Right cardiac atrium (tissue), 5 donors: ENCODE measurements at regions of chr3 and their contacts with region 1.

Region 1: GRCh38 chr3:126197854-126198584 is 17.6 kb upstream of the ALDH1L1 start:
- DNase-seq: peak; percentile 64 to 79 (median 67)
- ATAC-seq: peak; percentile 91 to 92
- H3K4me3 ChIP-seq: no peak overlapping the region
- H3K27ac ChIP-seq: no peak overlapping the region
- H3K4me1 ChIP-seq: no peaks in the 10 kb centered on the region
- H3K27me3 ChIP-seq: no peaks in the 10 kb centered on the region

Region 2: DNA sequence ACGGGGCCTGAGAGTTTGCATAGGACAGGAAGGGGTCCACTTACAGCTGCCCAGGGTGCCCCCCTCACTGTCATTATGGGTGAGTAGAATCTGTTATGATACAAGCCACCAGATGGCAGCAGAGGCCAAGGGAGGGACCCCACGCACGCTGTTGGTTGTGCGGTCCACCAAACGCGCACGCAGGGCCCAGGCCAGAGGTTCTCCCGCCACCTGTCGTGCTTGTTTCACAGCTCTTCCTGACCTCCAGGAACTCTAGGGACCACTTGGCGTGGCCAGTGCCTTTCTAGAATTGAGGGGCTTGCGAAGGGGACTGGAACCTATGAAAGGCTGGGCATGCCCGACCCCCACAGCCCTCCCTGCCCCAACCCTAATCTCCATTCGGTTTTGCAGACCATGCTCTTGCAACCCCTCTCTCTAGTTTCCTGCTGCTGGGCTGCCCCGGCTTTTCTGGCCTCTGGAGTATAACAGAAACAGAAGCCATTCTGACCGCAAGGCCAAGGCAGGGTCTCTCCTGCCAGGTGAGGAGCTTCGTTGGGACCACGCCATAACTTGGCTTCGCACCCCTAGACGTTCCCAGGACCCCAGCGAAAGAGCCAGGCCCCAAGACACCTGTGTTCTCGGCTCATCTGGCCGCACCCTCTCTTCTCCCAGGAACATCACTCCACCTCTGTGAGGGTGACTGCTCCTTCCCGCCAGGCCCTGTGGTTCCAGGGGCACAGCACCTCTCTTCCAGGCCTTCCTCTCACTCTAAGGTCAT is 63.6 kb before region 1 on chr3:
- intact Hi-C with region 1: loop called in 3 of 4 experiments (anchors 2 to 10 kb)
- DNase-seq: peak; percentile 66 to 84 (median 77)
- ATAC-seq: peak; percentile 70 to 82
- H3K4me3 ChIP-seq: no peak overlapping the region
- H3K27ac ChIP-seq: no peak overlapping the region
- H3K4me1 ChIP-seq: no peaks in the 10 kb centered on the region
- H3K27me3 ChIP-seq: no peaks in the 10 kb centered on the region